GM12878 (cell line): ENCODE measurements at regions of chr10 and their contacts with region 1.

Region 1: DNA sequence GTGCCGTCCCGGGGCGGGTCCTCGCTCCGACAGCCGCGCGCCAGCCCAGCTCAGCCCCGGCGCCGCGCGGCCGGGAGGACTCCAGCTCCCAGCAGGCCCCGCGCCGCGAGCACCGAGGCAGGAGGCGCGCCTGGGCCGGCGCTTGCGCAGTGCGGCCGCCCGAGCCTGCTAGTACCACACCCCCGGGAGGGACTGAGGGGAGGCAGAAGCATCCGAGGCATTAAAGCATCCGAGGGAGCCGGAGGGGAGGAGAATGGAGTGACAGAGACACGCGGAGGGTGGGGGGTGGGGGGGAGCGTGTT is at the start of gene GRK5:
- DNase-seq: peak; percentile 86
- ATAC-seq: peak; percentile 85
- H3K4me3 ChIP-seq: peak within 1 kb of the TSS; percentile 80
- H3K27ac ChIP-seq: peak within 1 kb of the TSS; percentile 85
- H3K4me1 ChIP-seq: peaks cover 11% of the 10 kb centered on the region
- H3K27me3 ChIP-seq: no peaks in the 10 kb centered on the region
- CTCF ChIP-seq: no peak
- EP300 ChIP-seq: no peak
- POLR2A ChIP-seq: peak; percentile 84
- RAD21 ChIP-seq: no peak
- polyA plus RNA-seq, gene GRK5: 0.11 to 0.86 TPM

Region 2: GRCh38 chr10:118944959-118945633 is 262.2 kb before region 1 on chr10:
- CTCF ChIA-PET with region 1: no interaction called
- POLR2A ChIA-PET with region 1: no interaction called
- RAD21 ChIA-PET with region 1: no interaction called
- SMC1A ChIA-PET with region 1: no interaction called
- in situ Hi-C with region 1: no loop called
- intact Hi-C with region 1: no loop called
- DNase-seq: no peak
- ATAC-seq: no peak
- H3K4me3 ChIP-seq: no peak overlapping the region
- H3K27ac ChIP-seq: no peak overlapping the region
- H3K4me1 ChIP-seq: no peaks in the 10 kb centered on the region
- H3K27me3 ChIP-seq: peaks cover 0 to 2% of the 10 kb centered on the region in 2 experiments; a peak in 2 of 4 replicates
- CTCF ChIP-seq: no peak
- EP300 ChIP-seq: no peak
- POLR2A ChIP-seq: no peak
- RAD21 ChIP-seq: no peak

Region 3: DNA sequence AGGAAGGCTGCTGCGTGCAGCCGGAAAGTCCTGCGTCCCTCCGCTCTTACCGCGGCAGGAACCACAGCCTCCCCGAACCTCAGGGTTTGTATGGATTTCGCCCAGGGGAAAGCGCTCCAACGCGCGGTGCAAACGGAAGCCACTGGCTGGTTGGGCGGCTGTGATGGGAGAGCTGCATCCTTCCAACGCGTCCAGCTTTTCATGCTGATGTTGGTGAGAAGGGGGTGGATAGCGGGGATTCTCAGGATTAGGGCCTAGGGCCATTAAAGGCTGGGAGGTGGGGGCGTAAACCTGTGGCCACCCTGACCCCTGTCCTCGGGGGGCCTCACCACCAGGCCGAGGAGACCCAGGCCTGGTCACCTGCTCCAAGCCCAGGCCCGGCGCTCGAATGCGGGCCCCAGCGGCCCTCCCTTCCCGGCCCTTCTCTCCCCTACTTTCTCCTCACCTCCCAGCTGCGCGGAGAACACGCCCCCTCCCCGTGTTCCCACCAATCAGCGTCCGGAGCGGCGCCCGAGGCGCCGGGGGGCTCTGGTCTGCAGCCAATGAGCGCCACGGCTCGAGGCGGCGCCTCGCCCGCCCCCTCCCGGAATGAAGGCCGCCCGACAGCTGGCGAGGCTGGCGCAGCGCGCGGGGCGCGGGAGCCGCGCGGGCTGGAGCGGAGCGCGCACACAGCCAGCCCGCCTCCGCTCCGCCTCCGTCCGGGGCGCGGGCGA is 178.3 kb before region 1 on chr10:
- CTCF ChIA-PET with region 1: interaction called, 12 read pairs
- POLR2A ChIA-PET with region 1: no interaction called
- RAD21 ChIA-PET with region 1: interaction called, 4 read pairs
- SMC1A ChIA-PET with region 1: no interaction called
- in situ Hi-C with region 1: no loop called
- intact Hi-C with region 1: no loop called
- DNase-seq: peak; percentile 35
- ATAC-seq: peak; percentile 68
- H3K4me3 ChIP-seq: peak overlapping the region; percentile 54
- H3K27ac ChIP-seq: no peak overlapping the region
- H3K4me1 ChIP-seq: peaks cover 13% of the 10 kb centered on the region
- H3K27me3 ChIP-seq: no peaks in the 10 kb centered on the region; a peak in 1 of 4 replicates
- CTCF ChIP-seq: peak; percentile 9 to 24 (median 10); a peak in 2 of 6 replicates
- EP300 ChIP-seq: no peak
- POLR2A ChIP-seq: no peak
- RAD21 ChIP-seq: no peak

Region 4: DNA sequence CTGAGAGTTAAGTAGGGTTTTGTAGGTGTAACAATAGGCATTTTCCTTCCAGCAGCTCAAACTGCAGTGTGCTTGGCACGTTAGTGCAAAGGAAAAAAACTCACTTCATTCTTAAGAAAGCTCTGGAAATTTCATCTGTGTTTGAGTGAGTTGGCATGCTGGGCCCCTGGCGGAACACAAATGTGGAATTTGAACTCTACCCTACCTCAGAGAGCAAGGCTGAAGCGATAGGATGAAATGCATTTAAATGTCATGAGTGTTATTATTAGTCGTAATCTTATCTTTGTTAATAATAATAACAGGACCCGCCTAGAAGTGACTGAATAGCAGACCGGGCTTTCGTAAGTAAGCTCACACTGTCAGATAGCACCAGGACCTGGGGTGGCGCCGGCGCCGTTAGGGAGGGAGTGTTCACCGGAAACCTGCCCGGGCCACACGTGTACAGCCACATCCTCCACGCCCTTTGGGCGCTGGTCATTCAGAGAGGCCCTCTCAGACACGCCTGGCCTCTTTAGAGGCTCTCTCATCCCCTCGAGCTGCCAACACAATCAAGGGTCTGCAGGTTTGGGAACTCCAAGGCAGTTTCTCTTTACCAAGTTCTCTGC is 63.5 kb after region 1 on chr10:
- CTCF ChIA-PET with region 1: interaction called, 6 read pairs
- POLR2A ChIA-PET with region 1: interaction called, 6 read pairs
- RAD21 ChIA-PET with region 1: interaction called, 8 read pairs
- SMC1A ChIA-PET with region 1: interaction called, 6 read pairs
- in situ Hi-C with region 1: no loop called
- intact Hi-C with region 1: loop called (anchors 2 kb)
- DNase-seq: no peak
- ATAC-seq: peak; percentile 85
- H3K4me3 ChIP-seq: peak overlapping the region; percentile 21; the same call in 1 of the 2 replicates
- H3K27ac ChIP-seq: peak overlapping the region; percentile 48
- H3K4me1 ChIP-seq: peaks cover 47% of the 10 kb centered on the region
- H3K27me3 ChIP-seq: no peaks in the 10 kb centered on the region
- CTCF ChIP-seq: no peak
- EP300 ChIP-seq: no peak
- POLR2A ChIP-seq: peak; percentile 64; the same call in 1 of the 2 replicates
- RAD21 ChIP-seq: no peak

Region 5: DNA sequence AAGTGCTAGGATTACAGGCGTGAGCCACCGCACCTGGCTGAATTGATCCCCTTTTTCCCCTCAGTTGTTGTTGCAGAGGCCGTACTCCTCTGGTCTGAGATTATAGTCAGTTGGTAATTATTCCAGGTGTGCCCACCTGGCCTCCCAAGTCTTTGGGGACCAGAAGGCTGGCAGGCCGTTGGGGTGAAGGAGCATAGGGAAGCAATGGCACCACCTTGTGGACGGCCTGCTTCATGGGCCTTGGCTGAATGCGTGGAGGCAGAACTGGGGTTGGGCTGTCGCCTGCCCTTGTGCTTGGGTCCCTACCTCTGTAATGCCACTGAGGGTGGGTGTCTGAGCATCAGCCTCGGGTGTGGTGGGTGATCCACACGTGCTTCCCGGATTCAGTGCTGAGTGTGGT is 209.5 kb after region 1 on chr10:
- CTCF ChIA-PET with region 1: interaction called, 33 read pairs
- POLR2A ChIA-PET with region 1: no interaction called
- RAD21 ChIA-PET with region 1: interaction called, 31 read pairs
- SMC1A ChIA-PET with region 1: interaction called, 7 read pairs
- in situ Hi-C with region 1: no loop called
- intact Hi-C with region 1: loop called (anchors 2 kb)
- DNase-seq: peak; percentile 15
- ATAC-seq: peak; percentile 97
- H3K4me3 ChIP-seq: no peak overlapping the region
- H3K27ac ChIP-seq: no peak overlapping the region
- H3K4me1 ChIP-seq: no peaks in the 10 kb centered on the region
- H3K27me3 ChIP-seq: no peaks in the 10 kb centered on the region
- CTCF ChIP-seq: peak; percentile 84 to 90 (median 85)
- EP300 ChIP-seq: no peak
- POLR2A ChIP-seq: no peak
- RAD21 ChIP-seq: peak; percentile 93

Region 6: DNA sequence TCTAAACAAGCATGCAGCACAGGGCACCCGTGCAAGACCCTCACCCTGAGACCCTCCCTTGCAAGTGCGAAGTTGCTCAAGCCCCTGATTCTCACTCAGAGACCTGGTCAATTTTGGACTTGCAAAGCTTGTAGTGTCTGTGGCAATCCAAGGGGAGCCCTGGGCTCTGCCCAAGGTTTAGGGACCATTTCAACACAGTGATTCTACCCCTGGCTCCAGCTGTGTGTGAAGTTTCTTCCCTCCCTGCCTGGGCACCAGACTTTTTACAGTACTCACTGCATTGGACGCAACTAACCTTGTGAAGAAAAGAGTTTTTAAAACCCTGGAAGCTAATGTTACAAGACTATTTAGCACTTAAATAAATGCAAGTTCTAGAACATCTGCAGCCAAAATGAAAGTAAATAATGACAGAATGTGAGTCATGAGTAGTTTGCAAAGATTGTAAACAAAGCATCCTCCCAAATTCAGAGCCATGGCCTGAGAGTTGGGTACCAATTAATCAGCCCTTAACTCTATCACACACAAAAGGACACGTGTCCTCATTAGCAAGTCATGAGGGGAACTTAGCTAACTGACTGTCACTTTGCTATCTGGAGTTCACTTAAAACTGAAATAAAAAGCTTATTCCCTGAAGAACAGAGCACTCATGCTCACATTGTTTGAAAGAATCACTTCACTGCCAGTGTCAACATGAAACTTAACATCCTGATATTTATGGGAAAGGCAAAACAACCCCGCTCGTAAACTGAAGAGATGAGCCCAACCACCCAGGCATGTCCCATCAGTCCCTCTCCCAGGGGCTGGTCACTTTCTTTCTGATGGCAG is 287.1 kb after region 1 on chr10:
- CTCF ChIA-PET with region 1: interaction called, 29 read pairs
- POLR2A ChIA-PET with region 1: interaction called, 3 read pairs
- RAD21 ChIA-PET with region 1: interaction called, 10 read pairs
- SMC1A ChIA-PET with region 1: interaction called, 12 read pairs
- in situ Hi-C with region 1: loop called (anchors 5 kb)
- intact Hi-C with region 1: loop called (anchors 1 kb)
- DNase-seq: no peak
- ATAC-seq: no peak
- H3K4me3 ChIP-seq: no peak overlapping the region
- H3K27ac ChIP-seq: no peak overlapping the region
- H3K4me1 ChIP-seq: peaks cover 15% of the 10 kb centered on the region
- H3K27me3 ChIP-seq: no peaks in the 10 kb centered on the region
- CTCF ChIP-seq: no peak
- EP300 ChIP-seq: no peak
- POLR2A ChIP-seq: no peak
- RAD21 ChIP-seq: no peak

Region 7: DNA sequence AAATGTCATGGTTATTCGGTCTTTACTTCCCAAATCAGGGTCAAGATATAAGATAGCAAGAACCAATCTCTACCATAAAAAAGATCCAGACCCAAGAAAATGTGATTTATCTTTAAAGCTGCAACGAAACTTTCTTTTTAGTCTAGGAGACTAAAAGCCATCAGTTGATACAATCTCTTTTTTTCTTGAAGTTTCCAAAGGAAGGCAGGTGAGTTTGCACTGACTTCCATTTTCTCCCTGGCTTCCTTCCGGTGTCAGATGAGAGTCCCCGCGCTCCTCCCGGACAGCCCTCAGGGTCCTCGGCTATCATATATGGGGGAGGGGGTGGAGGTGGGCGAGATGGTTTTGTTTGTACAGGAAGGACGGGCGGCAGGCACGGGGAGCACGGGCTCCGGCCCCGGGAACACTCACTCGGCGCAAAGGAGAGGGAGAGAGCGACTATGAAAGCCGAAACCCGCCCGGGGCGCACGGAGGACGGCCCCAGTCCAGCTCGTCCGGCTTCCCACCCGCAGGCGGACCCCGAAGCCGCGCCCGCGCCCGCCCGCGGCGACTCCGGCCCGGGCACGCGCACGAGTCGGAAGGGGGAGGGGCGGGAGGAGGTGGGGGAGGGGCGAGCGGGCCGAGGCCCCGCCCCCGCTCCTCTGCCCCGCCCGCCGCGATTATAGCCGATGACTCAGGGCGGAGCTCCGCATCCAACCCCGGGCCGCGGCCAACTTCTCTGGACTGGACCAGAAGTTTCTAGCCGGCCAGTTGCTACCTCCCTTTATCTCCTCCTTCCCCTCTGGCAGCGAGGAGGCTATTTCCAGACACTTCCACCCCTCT is 443.6 kb after region 1 on chr10 and contains the start of gene BAG3:
- CTCF ChIA-PET with region 1: interaction called, 5 read pairs
- POLR2A ChIA-PET with region 1: no interaction called
- RAD21 ChIA-PET with region 1: no interaction called
- SMC1A ChIA-PET with region 1: no interaction called
- in situ Hi-C with region 1: no loop called
- intact Hi-C with region 1: loop called (anchors 5 kb)
- DNase-seq: no peak
- ATAC-seq: peak; percentile 84
- H3K4me3 ChIP-seq: peak within 1 kb of the TSS; percentile 90
- H3K27ac ChIP-seq: peak within 1 kb of the TSS; percentile 67
- H3K4me1 ChIP-seq: no peaks in the 10 kb centered on the region
- H3K27me3 ChIP-seq: no peaks in the 10 kb centered on the region
- CTCF ChIP-seq: no peak
- EP300 ChIP-seq: no peak
- POLR2A ChIP-seq: peak; percentile 86
- RAD21 ChIP-seq: no peak
- polyA plus RNA-seq, gene BAG3: 1.8 to 2.7 TPM